Activated CD4-positive, alpha-beta memory T cell treated with anti-CD3 and anti-CD28 coated beads for 36 hours (primary cell): ENCODE measurements at regions of chr12 and their contacts with region 1.

Region 1: DNA sequence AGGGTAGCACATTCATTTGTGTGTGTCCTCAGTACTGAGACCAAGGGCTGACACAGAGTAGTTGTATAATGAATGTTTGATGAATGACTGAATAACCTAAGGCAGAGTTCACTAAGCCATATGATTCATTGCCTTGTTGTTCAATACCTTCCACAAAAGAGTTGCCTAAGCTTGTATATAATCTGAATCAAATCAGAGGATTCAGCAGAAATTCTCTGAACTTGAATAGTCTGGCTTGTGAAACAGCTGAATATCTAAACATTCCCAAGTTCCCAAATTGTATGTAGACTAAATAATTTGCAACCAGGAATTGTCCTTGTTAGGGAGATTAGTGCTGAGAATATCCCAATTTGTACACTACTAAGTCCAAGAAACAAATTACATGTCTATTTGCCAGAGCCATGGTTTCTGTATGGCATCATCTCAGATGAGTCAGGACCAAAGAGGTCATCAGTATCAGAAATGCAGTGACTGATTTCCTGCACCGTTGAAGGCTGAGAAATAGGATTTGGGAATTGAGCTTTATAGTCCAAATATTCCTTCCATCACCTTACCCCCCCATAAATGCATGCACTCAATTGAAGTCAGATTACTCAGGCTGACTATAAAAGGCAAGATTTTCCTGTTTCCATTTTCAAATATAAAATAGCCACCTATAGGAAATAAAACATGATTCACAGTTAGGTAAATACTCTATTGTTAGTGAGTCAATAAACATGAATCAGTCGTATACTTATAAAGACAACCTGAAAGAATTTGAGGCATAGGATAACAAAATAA is 168.7 kb downstream of the PHLDA1 start:
- DNase-seq: no peak
- H3K4me3 Mint-ChIP-seq: no peak overlapping the region
- H3K27ac Mint-ChIP-seq: no peak overlapping the region
- H3K4me1 Mint-ChIP-seq: peaks cover 7% of the 10 kb centered on the region
- H3K27me3 Mint-ChIP-seq: no peaks in the 10 kb centered on the region

Region 2: DNA sequence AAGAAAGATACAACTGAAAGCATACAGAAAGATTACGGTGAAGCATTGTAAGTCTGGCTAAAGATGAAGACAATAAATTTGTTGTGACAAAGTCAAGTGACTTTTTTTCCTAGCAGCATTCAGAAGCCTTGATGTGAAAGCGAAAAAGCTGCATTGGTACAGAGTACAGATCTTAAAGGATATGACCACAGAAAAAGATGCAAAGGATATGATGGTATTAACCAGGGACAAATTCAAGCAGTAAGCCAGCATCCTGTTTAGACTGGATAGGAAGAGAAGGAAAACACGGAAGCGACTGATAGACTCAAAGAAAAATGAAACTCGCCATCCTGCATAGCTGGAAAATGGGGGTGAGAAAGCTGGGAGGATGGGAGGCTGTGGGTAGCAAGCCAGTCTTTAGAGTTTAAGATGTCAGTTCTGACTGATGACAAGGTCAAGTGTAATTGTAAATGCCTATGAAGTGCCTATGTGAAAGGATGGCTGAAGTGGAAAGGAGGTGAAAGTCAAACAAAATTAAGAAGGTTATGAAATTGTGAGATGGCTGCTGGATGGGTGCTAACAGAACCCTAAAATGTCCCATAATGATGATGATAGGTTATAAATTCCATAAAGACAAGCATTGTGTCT is 76.2 kb after region 1 on chr12:
- CTCF ChIA-PET with region 1: no interaction called
- POLR2A ChIA-PET with region 1: no interaction called
- intact Hi-C with region 1: loop called (anchors 5 kb)
- DNase-seq: no peak
- H3K4me3 Mint-ChIP-seq: no peak overlapping the region
- H3K27ac Mint-ChIP-seq: no peak overlapping the region
- H3K4me1 Mint-ChIP-seq: peaks cover 20% of the 10 kb centered on the region
- H3K27me3 Mint-ChIP-seq: no peaks in the 10 kb centered on the region